ENCODE measurements at regions of chr2 and their contacts with region 1.

Region 1: DNA sequence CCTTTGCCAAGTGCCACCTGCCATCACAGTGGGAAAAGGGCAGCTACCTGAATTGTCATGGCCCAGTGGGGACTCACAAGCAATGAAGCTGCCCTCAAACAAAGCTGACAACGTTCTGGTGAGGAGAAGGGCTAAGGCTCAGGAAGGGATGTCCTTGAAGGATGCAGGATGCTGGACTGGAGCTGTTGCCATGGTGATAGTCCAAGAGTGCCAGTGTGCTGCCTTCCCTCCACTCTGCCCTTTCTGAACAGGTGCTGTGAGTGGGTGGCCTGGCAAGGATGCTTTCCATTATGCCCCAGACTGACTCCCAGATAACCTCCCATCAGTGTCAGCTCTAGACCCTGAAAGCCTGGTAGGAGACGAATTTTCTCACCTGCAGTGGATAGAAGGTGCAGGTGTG is 137.8 kb upstream of the GYPC start:
- DNase-seq: no peak
- CTCF ChIP-seq: no peak

Region 2: GRCh38 chr2:126504949-126505348 is 13.2 kb before region 1 on chr2:
- CTCF ChIA-PET with region 1: interaction called, 10 read pairs
- POLR2A ChIA-PET with region 1: no interaction called
- DNase-seq: no peak
- CTCF ChIP-seq: no peak

Region 3: GRCh38 chr2:126686841-126687485 is 168.8 kb after region 1 on chr2:
- CTCF ChIA-PET with region 1: no interaction called
- POLR2A ChIA-PET with region 1: no interaction called
- DNase-seq: no peak
- CTCF ChIP-seq: no peak

Region 4: DNA sequence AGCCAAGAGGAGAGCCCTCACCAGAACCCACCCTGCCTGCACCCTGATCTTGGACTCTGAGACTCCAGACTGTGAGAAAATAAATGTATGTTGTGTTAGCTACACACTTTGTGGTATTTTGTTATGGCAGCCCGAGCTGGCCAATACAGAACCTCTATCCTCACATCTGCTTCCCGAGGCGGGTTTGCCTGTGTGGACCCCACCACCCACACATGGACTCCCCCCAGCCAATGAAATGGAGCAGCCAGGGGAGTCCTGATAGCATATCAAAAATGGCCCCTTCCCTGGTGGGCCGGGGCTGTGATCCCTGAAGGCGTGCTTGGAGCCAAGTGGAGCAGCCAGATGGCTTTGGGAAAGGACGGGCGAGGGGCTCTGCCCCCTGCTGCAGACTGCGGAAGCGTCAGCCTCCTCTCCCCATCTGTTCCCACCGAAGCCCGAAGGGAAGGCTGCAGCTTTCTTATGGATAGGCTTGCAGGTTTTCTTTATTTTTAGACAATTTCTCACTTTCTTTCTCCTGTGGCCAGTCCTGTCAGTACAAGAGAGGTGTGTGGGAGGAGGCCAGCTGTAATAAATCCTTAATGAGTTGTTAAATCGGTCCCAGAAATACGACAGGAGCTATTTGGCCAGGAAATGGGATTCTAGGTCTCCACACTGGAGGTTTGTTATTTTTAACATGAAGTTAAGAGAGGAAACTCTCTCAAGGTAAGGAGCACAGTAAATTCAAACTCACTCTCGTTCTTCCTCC is 414.9 kb after region 1 on chr2:
- CTCF ChIA-PET with region 1: no interaction called
- POLR2A ChIA-PET with region 1: no interaction called
- DNase-seq: no peak
- CTCF ChIP-seq: no peak

Measured in GM10248 (cell line).